ENCODE measurements at regions of chr22 and their contacts with region 1.

Region 1: GRCh38 chr22:22884010-22884887 is 3.4 kb upstream of the IGLL5 start:
- DNase-seq: peak; percentile 83
- ATAC-seq: peak; percentile 96
- H3K4me3 Mint-ChIP-seq: no peak overlapping the region
- H3K27ac Mint-ChIP-seq: no peak overlapping the region
- H3K4me1 Mint-ChIP-seq: no peaks in the 10 kb centered on the region
- H3K27me3 Mint-ChIP-seq: peaks cover 83% of the 10 kb centered on the region
- CTCF ChIP-seq: peak; percentile 58

Region 2: DNA sequence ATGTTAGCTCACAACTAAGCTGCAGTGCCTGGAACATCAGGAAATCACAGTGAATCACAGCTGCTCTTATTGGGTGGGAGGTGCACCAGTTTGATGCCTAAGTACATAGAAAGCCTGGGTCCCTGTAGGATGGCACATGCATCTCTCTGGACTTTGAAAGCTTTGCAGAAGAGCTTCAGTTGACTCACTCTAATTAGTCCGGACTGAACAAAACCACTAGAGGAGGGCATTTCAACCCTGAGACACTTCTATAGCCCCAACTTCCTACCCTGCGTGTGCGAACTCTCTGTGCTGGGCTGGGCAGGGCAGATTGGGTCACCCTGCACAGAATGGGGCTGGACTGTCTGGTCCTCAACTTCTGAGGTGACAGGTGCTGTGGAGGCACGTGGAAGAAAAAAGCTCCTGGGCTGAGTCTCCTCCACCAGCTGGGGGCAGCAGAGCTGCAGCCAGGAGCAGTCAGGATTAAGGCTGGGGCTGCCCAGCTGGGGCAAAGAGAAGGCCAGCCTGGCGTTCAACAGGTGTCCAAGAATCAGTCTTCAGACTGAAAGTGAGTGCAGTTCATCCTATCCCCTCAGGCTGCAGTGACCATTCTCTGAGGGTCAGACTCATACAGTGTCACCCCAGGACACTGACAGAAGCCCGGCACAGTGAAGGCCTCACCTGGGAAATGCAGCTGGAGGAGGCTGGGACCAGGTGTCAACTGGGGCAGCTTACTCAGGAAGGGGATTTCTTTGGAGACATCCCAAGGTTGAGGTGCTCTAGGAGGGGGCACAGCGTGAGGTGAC is 217.8 kb before region 1 on chr22:
- CTCF ChIA-PET with region 1: interaction called, 12 read pairs
- POLR2A ChIA-PET with region 1: no interaction called
- DNase-seq: peak; percentile 71
- ATAC-seq: peak; percentile 95
- H3K4me3 Mint-ChIP-seq: no peak overlapping the region
- H3K27ac Mint-ChIP-seq: no peak overlapping the region
- H3K4me1 Mint-ChIP-seq: no peaks in the 10 kb centered on the region
- H3K27me3 Mint-ChIP-seq: peaks cover 96% of the 10 kb centered on the region
- CTCF ChIP-seq: peak; percentile 23; the same call in 1 of the 2 replicates

Region 3: GRCh38 chr22:22753526-22754267 is 130.6 kb before region 1 on chr22:
- CTCF ChIA-PET with region 1: interaction called, 33 read pairs
- POLR2A ChIA-PET with region 1: no interaction called
- DNase-seq: peak; percentile 83
- ATAC-seq: peak; percentile 97
- H3K4me3 Mint-ChIP-seq: no peak overlapping the region
- H3K27ac Mint-ChIP-seq: no peak overlapping the region
- H3K4me1 Mint-ChIP-seq: no peaks in the 10 kb centered on the region
- H3K27me3 Mint-ChIP-seq: peaks cover 96% of the 10 kb centered on the region
- CTCF ChIP-seq: peak; percentile 33; the same call in 1 of the 2 replicates

Region 4: DNA sequence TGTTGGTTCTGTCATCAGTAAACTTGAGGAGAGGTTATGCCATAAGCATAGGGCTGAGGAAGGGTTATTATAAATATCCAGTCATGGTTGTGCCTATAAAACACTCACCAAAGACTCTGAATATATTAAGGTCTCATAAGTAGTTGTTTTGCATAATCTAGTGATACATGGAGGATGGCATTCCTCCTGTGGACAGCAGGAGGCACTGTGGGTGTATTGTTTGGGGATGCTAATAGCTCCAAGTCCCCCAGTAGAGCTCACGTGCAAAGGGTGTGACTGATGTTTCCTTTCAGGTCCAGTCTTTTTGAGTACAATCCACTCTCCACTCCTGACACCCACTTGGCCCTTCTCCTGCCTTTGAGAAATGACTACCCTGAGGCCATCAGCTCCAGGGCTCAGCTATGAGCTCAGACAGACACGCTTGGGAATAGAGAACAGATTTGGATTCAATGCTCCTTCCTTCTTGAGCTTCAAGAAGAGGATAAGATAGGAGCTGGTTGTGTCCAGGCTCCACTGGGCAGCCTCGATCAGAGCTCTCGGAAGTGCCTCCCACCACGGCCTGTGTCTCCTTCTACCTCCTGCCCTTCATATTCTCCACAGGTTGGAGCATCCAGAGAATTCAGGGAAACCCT is 81.8 kb before region 1 on chr22:
- CTCF ChIA-PET with region 1: interaction called, 37 read pairs
- POLR2A ChIA-PET with region 1: no interaction called
- DNase-seq: no peak
- ATAC-seq: peak; percentile 62
- H3K4me3 Mint-ChIP-seq: no peak overlapping the region
- H3K27ac Mint-ChIP-seq: no peak overlapping the region
- H3K4me1 Mint-ChIP-seq: peaks cover 5% of the 10 kb centered on the region; the same call in 1 of the 2 replicates
- H3K27me3 Mint-ChIP-seq: peaks cover 94% of the 10 kb centered on the region
- CTCF ChIP-seq: no peak

Region 5: DNA sequence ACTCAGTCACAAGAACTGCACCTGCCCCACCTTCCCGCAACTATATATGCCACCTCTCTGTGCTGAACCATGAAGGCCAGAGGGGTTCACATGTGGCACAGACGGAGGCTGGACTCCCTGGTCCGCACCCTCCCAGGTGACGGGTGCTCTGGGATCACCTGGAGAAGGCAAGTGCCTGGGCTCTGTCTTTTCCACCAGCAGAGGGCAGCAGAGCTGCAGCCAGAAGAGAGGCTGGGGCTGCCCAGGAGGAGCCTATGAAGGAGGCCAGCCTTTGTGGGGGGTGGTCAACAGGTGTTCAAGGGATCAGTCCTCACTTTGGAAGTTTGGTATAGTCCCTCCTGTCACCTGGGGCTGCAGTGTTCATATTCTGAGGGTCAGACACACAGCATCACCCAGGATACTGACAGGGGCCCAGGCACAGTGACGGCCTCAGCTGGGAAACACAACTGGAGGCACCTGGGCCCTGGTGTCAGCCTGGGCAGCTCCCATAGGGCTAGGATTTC is 35.8 kb before region 1 on chr22:
- CTCF ChIA-PET with region 1: interaction called, 102 read pairs
- POLR2A ChIA-PET with region 1: interaction called, 3 read pairs
- DNase-seq: peak; percentile 90
- ATAC-seq: peak; percentile 98
- H3K4me3 Mint-ChIP-seq: no peak overlapping the region
- H3K27ac Mint-ChIP-seq: no peak overlapping the region
- H3K4me1 Mint-ChIP-seq: no peaks in the 10 kb centered on the region; the same call in 1 of the 2 replicates
- H3K27me3 Mint-ChIP-seq: peaks cover 83% of the 10 kb centered on the region
- CTCF ChIP-seq: peak; percentile 82

Region 6: GRCh38 chr22:22897091-22897490 is 12.8 kb after region 1 on chr22:
- CTCF ChIA-PET with region 1: interaction called, 25 read pairs
- POLR2A ChIA-PET with region 1: no interaction called
- DNase-seq: no peak
- ATAC-seq: no peak
- H3K4me3 Mint-ChIP-seq: no peak overlapping the region
- H3K27ac Mint-ChIP-seq: no peak overlapping the region
- H3K4me1 Mint-ChIP-seq: no peaks in the 10 kb centered on the region
- H3K27me3 Mint-ChIP-seq: peaks cover 75% of the 10 kb centered on the region
- CTCF ChIP-seq: no peak

Region 7: DNA sequence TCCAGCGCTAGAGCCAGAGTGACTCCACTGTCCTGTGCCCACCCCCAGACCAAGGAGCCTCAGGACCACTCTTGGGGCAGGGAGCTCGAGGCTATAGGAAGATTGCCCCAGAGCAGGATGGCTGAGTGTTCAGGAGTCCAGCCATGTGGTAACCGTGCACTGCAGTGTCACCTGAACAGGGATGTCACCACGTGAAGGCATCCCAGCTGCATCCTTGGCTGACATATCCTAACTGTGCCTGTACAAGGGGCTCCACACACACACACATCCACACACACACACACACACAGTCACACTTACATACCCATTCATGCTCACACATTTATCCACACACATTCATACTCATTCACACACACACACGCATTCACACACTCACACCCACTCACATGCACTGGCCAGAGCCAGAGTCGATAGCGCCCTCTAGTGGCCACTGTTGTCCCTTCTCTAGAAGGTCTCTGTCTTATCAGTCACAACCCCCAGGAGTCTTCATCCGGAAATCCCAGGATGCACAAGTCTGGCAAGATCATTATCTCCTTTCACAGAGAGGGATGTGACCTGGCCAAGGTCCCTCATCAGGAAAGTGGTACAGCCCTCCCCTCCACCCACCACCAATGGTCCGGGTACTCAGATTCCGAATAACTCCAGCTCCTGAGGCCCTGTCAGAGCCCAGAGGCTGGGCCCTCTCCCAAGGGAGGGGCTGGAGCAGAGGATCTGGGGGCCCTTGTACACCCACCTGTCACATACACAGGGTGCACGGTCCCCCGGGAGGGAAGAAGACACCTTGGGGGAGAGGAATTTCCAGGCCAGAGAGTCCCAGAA is 58.5 kb after region 1 on chr22:
- CTCF ChIA-PET with region 1: interaction called, 30 read pairs
- POLR2A ChIA-PET with region 1: no interaction called
- DNase-seq: peak; percentile 91
- ATAC-seq: peak; percentile 88
- H3K4me3 Mint-ChIP-seq: no peak overlapping the region
- H3K27ac Mint-ChIP-seq: no peak overlapping the region
- H3K4me1 Mint-ChIP-seq: no peaks in the 10 kb centered on the region
- H3K27me3 Mint-ChIP-seq: peaks cover 51% of the 10 kb centered on the region
- CTCF ChIP-seq: peak; percentile 94

Region 8: GRCh38 chr22:22981670-22982571 is 97.7 kb after region 1 on chr22:
- CTCF ChIA-PET with region 1: no interaction called
- POLR2A ChIA-PET with region 1: no interaction called
- DNase-seq: no peak
- ATAC-seq: no peak
- H3K4me3 Mint-ChIP-seq: no peak overlapping the region
- H3K27ac Mint-ChIP-seq: no peak overlapping the region
- H3K4me1 Mint-ChIP-seq: no peaks in the 10 kb centered on the region
- H3K27me3 Mint-ChIP-seq: peaks cover 62% of the 10 kb centered on the region
- CTCF ChIP-seq: no peak